ENCODE measurements at regions of chr9 and their contacts with region 1.

Region 1: GRCh38 chr9:127770905-127771569 is 7.4 kb downstream of the SH2D3C start:
- DNase-seq: peak; percentile 90
- ATAC-seq: peak; percentile 95
- H3K4me3 ChIP-seq: peak overlapping the region; percentile 79
- H3K27ac ChIP-seq: peak overlapping the region; percentile 23; the same call in 1 of the 2 replicates
- H3K4me1 ChIP-seq: peaks cover 24% of the 10 kb centered on the region
- H3K27me3 ChIP-seq: no peaks in the 10 kb centered on the region
- CTCF ChIP-seq: no peak
- EP300 ChIP-seq: no peak
- POLR2A ChIP-seq: peak; percentile 78
- RAD21 ChIP-seq: no peak

Region 2: GRCh38 chr9:127224178-127224882 is 546.7 kb before region 1 on chr9:
- CTCF ChIA-PET with region 1: no interaction called
- POLR2A ChIA-PET with region 1: no interaction called
- RAD21 ChIA-PET with region 1: no interaction called
- SMC1A ChIA-PET with region 1: no interaction called
- in situ Hi-C with region 1: no loop called
- intact Hi-C with region 1: no loop called
- DNase-seq: peak; percentile 56
- ATAC-seq: peak; percentile 85
- H3K4me3 ChIP-seq: peak overlapping the region; percentile 67; the same call in 1 of the 2 replicates
- H3K27ac ChIP-seq: peak overlapping the region; percentile 43; the same call in 1 of the 2 replicates
- H3K4me1 ChIP-seq: peaks cover 27% of the 10 kb centered on the region
- H3K27me3 ChIP-seq: peaks cover 0 to 2% of the 10 kb centered on the region in 2 experiments; a peak in 2 of 4 replicates
- CTCF ChIP-seq: 0 out of 6 replicates have a peak, but pooled peaks of 1 of the 3 experiments have one; percentile 3
- EP300 ChIP-seq: no peak
- POLR2A ChIP-seq: peak; percentile 76
- RAD21 ChIP-seq: no peak

Region 3: DNA sequence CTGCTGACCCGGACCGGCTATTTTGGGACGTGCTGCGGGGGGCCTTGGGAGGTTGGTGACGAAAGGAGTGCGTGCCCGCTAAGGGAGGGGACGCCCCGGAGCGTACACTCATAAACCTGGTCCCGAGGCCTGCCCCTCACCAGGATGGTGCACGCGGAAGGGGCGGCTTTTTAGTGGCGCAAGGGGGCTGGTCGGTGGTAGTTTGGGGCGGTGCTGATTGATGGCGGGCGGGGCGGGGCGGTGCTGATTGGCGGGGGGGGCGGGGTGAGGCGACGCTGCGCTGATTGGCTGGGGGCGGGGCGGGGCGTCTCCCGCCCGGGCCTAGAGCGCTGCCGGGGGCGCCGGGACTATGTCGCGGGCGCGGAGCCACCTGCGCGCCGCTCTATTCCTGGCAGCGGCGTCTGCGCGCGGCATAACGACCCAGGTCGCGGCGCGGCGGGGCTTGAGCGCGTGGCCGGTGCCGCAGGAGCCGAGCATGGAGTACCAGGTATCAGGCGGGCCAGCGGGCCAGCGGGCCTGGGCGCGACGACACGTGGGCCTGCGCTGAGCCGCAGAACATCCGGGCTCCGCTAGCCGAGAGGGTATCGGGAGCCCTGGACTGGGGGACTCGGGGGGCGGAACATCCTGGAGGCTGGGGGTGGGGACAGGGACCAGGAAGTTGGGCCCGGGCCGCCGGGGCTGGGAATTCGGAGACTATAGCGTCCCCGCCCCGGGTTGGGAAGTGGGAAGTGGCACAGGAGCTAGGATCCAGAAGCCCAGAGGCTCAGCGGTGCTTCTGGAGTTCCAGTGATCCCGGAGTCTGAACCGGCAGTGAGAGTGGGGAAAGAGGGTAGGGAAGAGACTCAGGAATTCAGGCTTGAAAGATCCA is 31.8 kb after region 1 on chr9 and contains the start of gene FPGS:
- CTCF ChIA-PET with region 1: interaction called, 5 read pairs
- POLR2A ChIA-PET with region 1: interaction called, 12 read pairs
- RAD21 ChIA-PET with region 1: interaction called, 3 read pairs
- SMC1A ChIA-PET with region 1: interaction called, 3 read pairs
- in situ Hi-C with region 1: no loop called
- intact Hi-C with region 1: no loop called
- DNase-seq: peak; percentile 49
- ATAC-seq: peak; percentile 91
- H3K4me3 ChIP-seq: peak within 1 kb of the TSS; percentile 85
- H3K27ac ChIP-seq: peak within 1 kb of the TSS; percentile 97
- H3K4me1 ChIP-seq: peaks cover 16% of the 10 kb centered on the region
- H3K27me3 ChIP-seq: no peaks in the 10 kb centered on the region
- CTCF ChIP-seq: no peak
- EP300 ChIP-seq: no peak
- POLR2A ChIP-seq: peak; percentile 93
- RAD21 ChIP-seq: no peak
- polyA plus RNA-seq, gene FPGS: 1.2 to 8.2 TPM